ENCODE measurements at regions of chr6 and their contacts with region 1.

Region 1: DNA sequence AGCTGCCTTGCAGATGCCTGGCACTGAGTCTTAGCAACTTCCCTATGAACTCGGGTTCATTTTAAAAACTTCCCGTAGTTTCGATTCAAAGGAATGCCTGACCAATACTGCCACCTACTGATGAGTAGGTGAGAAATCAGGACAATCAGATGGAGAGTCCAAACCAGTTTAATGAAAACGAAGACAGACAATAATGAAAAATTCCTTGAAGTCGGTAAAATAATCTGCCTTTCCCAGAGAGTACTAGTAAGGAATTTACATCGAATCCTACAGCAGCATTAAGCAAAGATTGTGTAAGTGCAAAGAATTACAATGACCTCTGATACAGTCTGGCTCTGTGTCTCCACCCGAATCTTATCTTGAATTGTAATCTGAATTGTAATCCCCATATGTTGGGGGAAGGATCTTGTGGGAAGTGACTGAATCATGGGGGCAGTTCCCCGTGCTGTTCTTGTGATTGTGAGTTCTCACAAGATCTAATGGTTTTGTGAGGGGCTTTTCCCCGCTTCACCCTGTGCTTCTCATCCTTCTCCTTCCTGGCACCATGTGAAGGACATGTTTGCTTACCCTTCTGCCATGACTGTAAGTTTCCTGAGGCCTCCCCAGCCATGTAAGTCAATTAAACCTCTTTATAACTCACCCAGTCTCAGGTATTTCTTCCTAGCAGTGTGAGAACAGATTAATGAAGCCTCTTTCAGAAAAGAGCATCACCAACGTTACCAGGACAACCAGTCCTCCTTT is 134.4 kb downstream of the ARHGAP18 start:
- DNase-seq: peak in 1 of 2 experiments; percentile 32
- H3K4me3 ChIP-seq: no peak overlapping the region
- H3K4me3 Mint-ChIP-seq: no peak overlapping the region
- H3K27ac Mint-ChIP-seq: no peak overlapping the region
- H3K4me1 ChIP-seq: peaks cover 10% of the 10 kb centered on the region
- H3K4me1 Mint-ChIP-seq: peaks cover 10% of the 10 kb centered on the region
- H3K27me3 ChIP-seq: no peaks in the 10 kb centered on the region
- H3K27me3 Mint-ChIP-seq: no peaks in the 10 kb centered on the region
- CTCF ChIP-seq: peak; percentile 63 to 64

Region 2: GRCh38 chr6:129469070-129469662 is 106.4 kb before region 1 on chr6:
- CTCF ChIA-PET with region 1: no interaction called
- POLR2A ChIA-PET with region 1: no interaction called
- intact Hi-C with region 1: loop called (anchors 1 kb)
- DNase-seq: no peak
- H3K4me3 ChIP-seq: no peak overlapping the region
- H3K4me3 Mint-ChIP-seq: no peak overlapping the region
- H3K27ac Mint-ChIP-seq: no peak overlapping the region
- H3K4me1 ChIP-seq: no peaks in the 10 kb centered on the region
- H3K4me1 Mint-ChIP-seq: no peaks in the 10 kb centered on the region
- H3K27me3 ChIP-seq: no peaks in the 10 kb centered on the region
- H3K27me3 Mint-ChIP-seq: no peaks in the 10 kb centered on the region
- CTCF ChIP-seq: no peak

Measured in Caco-2 (cell line).